ENCODE measurements at regions of chr4 and their contacts with region 1.

Region 1: GRCh38 chr4:108355186-108355901 is 186.6 kb upstream of the LEF1 start:
- DNase-seq: peak; percentile 64 to 81 (median 70)
- H3K4me3 ChIP-seq: no peak overlapping the region
- H3K4me3 Mint-ChIP-seq: peak overlapping the region; percentile 0 to 89 (median 60)
- H3K27ac ChIP-seq: peak overlapping the region; percentile 48
- H3K27ac Mint-ChIP-seq: peak overlapping the region; percentile 79 to 96 (median 91)
- H3K4me1 ChIP-seq: peaks cover 61% of the 10 kb centered on the region
- H3K4me1 Mint-ChIP-seq: peaks cover 38 to 61% (median 60%) of the 10 kb centered on the region in 4 donors
- H3K27me3 ChIP-seq: no peaks in the 10 kb centered on the region
- H3K27me3 Mint-ChIP-seq: no peaks in the 10 kb centered on the region

Region 2: GRCh38 chr4:108036213-108036612 is 319.1 kb before region 1 on chr4:
- CTCF ChIA-PET with region 1: interaction called, 3 read pairs
- POLR2A ChIA-PET with region 1: interaction called, 4 read pairs
- intact Hi-C with region 1: loop called (anchors 5 kb)
- DNase-seq: peak; percentile 45 to 74 (median 60)
- H3K4me3 ChIP-seq: no peak overlapping the region
- H3K4me3 Mint-ChIP-seq: peak overlapping the region in 7 of 8 donors; percentile 21 to 75 (median 60)
- H3K27ac ChIP-seq: peak overlapping the region; percentile 0
- H3K27ac Mint-ChIP-seq: peak overlapping the region; percentile 59 to 93 (median 88)
- H3K4me1 ChIP-seq: peaks cover 13% of the 10 kb centered on the region
- H3K4me1 Mint-ChIP-seq: peaks cover 8 to 23% (median 13%) of the 10 kb centered on the region in 4 donors
- H3K27me3 ChIP-seq: no peaks in the 10 kb centered on the region
- H3K27me3 Mint-ChIP-seq: no peaks in the 10 kb centered on the region

Region 3: DNA sequence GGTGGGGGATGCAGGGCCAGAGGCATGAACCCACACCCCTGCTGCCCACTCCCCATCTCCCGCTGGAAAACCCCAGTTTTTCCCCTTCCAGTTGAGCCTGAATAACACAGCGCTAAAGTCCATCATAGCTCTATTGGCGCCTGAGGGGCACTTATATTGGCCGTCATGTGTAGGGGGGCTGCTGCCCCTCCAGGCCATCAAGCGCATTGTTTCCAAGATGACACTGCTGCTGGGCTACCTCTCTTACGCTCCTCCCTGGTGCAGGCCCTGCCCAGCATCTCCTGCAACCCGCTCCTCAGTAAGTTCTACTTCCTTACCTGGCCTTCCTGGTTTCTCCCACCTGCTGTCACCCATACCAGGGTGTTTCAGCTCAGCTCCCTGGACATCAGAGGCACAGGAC is 60.0 kb after region 1 on chr4:
- CTCF ChIA-PET with region 1: no interaction called
- POLR2A ChIA-PET with region 1: no interaction called
- intact Hi-C with region 1: no loop called
- DNase-seq: no peak
- H3K4me3 ChIP-seq: no peak overlapping the region
- H3K4me3 Mint-ChIP-seq: no peak overlapping the region
- H3K27ac ChIP-seq: no peak overlapping the region
- H3K27ac Mint-ChIP-seq: peak overlapping the region in 1 of 7 donors; percentile 10
- H3K4me1 ChIP-seq: peaks cover 9% of the 10 kb centered on the region
- H3K4me1 Mint-ChIP-seq: peaks cover 10 to 27% (median 14%) of the 10 kb centered on the region in 4 donors
- H3K27me3 ChIP-seq: no peaks in the 10 kb centered on the region
- H3K27me3 Mint-ChIP-seq: no peaks in the 10 kb centered on the region

Region 4: GRCh38 chr4:108433832-108434231 is 78.5 kb after region 1 on chr4:
- CTCF ChIA-PET with region 1: interaction called, 7 read pairs
- POLR2A ChIA-PET with region 1: interaction called, 7 read pairs
- intact Hi-C with region 1: loop called (anchors 5 kb)
- DNase-seq: peak; percentile 54 to 71 (median 69)
- H3K4me3 ChIP-seq: peak overlapping the region; percentile 13 to 14
- H3K4me3 Mint-ChIP-seq: peak overlapping the region; percentile 28 to 77 (median 64)
- H3K27ac ChIP-seq: peak overlapping the region; percentile 13
- H3K27ac Mint-ChIP-seq: peak overlapping the region; percentile 61 to 86 (median 80)
- H3K4me1 ChIP-seq: peaks cover 42% of the 10 kb centered on the region
- H3K4me1 Mint-ChIP-seq: peaks cover 35 to 71% (median 43%) of the 10 kb centered on the region in 4 donors
- H3K27me3 ChIP-seq: no peaks in the 10 kb centered on the region
- H3K27me3 Mint-ChIP-seq: no peaks in the 10 kb centered on the region

Region 5: DNA sequence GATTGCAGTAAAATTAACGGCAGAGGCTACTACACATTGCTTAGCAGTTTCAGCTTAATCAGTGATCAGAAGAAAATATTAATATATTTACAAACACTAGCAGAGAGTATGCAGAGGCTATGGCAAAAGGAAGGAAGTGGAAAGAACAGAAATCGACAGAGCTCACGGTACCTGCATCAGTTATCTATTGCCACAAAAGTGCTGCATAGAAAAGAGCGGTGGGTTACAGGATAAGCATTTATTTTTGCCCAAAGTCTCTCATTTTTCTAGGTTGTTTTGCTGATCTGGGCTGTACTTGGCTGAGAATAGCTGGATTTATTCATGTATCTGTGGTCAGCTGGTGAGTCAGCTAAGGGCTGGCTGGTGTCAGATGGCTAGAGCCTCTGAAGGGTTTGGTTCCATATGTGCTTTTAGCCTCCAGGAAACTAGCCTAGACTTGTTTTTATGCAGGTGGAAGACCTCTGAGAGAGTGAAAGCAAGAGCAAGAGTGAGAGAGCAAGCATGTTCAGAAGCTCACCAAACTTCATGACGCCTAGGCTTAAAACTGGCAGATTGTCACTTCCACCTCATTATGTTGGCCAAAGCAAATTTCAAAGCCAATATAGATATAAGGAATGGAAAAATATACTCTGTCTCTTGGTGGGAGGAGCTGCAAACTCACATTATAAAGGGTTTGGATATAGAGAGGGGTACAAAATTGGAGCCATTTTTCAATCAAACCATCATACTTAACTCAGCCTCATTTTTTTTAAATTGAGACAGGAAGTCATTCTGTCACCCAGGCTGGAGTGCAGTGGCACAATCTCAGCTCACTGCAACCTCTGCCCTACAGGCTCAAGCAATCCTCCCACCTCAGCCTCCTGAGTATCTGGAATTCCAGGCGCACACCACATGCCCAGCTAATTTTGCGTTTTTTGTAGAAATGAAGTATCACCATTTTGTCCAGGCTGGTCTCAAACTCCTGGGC is 111.9 kb after region 1 on chr4:
- CTCF ChIA-PET with region 1: no interaction called
- POLR2A ChIA-PET with region 1: no interaction called
- intact Hi-C with region 1: loop called (anchors 5 kb)
- DNase-seq: peak in 4 of 5 donors; percentile 20 to 33 (median 21)
- H3K4me3 ChIP-seq: no peak overlapping the region
- H3K4me3 Mint-ChIP-seq: peak overlapping the region; percentile 57 to 92 (median 74)
- H3K27ac ChIP-seq: no peak overlapping the region
- H3K27ac Mint-ChIP-seq: peak overlapping the region; percentile 70 to 92 (median 79)
- H3K4me1 ChIP-seq: peaks cover 32% of the 10 kb centered on the region
- H3K4me1 Mint-ChIP-seq: peaks cover 21 to 40% (median 32%) of the 10 kb centered on the region in 4 donors
- H3K27me3 ChIP-seq: no peaks in the 10 kb centered on the region
- H3K27me3 Mint-ChIP-seq: no peaks in the 10 kb centered on the region

Region 6: DNA sequence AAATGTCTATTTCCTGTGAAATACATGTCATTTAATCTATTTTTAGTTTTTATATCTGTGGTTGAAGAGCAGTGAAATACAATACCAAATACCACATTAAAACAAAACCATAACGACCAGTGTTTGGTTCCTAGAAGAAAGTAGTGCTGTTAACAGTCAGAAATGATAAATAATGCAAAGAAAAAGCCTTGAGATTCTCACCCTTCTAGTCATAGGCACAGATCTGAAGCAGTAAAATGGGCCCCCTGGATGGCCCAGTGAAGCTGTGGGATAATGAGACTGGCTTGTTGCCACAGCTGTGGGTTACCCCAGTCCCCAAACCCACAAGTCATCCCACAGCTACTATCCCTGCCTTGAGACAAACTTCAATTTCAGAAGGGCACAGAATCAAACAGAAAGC is 127.7 kb after region 1 on chr4:
- CTCF ChIA-PET with region 1: no interaction called
- POLR2A ChIA-PET with region 1: no interaction called
- intact Hi-C with region 1: no loop called
- DNase-seq: peak in 4 of 5 donors; percentile 15 to 42 (median 22)
- H3K4me3 ChIP-seq: peak overlapping the region in 1 of 2 donors; percentile 18
- H3K4me3 Mint-ChIP-seq: peak overlapping the region; percentile 36 to 80 (median 72)
- H3K27ac ChIP-seq: no peak overlapping the region
- H3K27ac Mint-ChIP-seq: peak overlapping the region; percentile 10 to 84 (median 40)
- H3K4me1 ChIP-seq: peaks cover 32% of the 10 kb centered on the region
- H3K4me1 Mint-ChIP-seq: peaks cover 26 to 48% (median 33%) of the 10 kb centered on the region in 4 donors
- H3K27me3 ChIP-seq: no peaks in the 10 kb centered on the region
- H3K27me3 Mint-ChIP-seq: no peaks in the 10 kb centered on the region

Measured in CD4-positive, alpha-beta memory T cell (primary cell).